ENCODE measurements at regions of chr10 and their contacts with region 1.

Region 1: DNA sequence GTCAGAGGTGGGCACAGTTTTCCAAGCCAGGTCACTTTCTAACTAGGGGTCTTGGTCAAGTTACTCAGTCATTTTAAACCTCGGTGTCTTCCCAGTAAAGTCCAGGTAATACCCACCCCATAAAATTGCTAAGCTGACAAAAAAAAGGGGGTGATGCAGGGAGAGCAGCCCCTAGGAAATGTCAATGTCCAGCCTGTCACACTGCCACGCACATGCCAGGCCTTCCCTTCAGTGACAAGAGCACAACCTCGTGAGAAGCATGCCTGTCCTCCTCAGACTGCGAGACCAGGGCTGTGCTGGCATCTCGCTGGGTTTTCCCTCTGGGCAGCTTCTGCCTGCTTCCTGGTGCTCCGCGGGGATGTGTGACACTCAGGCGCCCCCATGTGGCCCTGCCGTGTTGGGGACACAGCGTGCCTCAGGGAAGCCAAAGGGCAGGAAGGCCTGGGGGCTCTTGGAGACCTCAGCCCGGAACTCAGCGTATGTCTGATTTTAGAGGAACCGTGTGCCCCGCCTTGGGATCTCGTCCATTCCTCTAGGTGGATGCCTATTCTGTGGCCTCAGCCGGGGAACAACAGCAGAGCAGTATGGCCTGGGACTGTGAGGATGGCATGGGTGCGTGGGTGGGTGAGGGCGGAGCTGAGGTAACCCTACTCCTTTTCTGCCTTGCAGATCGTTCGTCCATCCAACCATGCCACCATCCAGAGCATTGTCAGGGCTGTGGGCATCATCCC is 10.2 kb upstream of the GDF2 start:
- DNase-seq: peak; percentile 77 to 85 (median 83)
- H3K4me3 ChIP-seq: no peak overlapping the region
- H3K27ac ChIP-seq: no peak overlapping the region
- H3K4me1 ChIP-seq: peaks cover 0 to 13% (median 3%) of the 10 kb centered on the region in 4 experiments
- H3K27me3 ChIP-seq: peaks cover 0 to 5% (median 0%) of the 10 kb centered on the region in 5 experiments

Region 2: DNA sequence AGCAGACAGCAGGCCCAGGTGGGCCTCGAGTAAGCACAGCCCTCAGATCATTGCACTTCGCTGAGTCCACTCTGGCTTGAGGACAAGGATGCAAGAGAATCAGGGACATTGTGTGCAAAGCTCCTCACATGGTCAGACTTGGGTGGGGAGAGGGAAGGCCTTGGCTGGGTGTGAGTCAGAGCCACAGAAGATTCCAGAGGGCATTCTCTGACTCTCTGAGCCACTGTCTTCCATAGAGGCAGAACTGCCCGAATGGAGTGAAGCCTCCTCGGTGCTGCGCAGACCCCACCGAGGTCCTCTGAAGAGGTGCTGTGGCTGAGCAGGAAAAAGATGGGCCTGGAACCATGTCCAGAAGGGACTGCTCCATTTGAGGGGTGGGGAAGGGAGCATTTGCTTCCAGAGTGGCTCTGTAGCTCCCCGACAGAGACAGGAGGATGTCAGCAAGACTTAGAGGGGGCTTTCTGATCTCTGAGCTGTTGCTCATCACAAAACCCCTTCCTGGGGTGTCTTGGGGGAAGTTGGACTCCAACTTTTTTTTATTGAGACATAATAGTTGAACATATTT is 280.1 kb before region 1 on chr10:
- CTCF ChIA-PET with region 1: interaction called, 69 read pairs
- POLR2A ChIA-PET with region 1: no interaction called
- DNase-seq: no peak
- H3K4me3 ChIP-seq: no peak overlapping the region
- H3K27ac ChIP-seq: no peak overlapping the region
- H3K4me1 ChIP-seq: no peaks in the 10 kb centered on the region
- H3K27me3 ChIP-seq: peaks cover 0 to 5% (median 0%) of the 10 kb centered on the region in 5 experiments

Region 3: DNA sequence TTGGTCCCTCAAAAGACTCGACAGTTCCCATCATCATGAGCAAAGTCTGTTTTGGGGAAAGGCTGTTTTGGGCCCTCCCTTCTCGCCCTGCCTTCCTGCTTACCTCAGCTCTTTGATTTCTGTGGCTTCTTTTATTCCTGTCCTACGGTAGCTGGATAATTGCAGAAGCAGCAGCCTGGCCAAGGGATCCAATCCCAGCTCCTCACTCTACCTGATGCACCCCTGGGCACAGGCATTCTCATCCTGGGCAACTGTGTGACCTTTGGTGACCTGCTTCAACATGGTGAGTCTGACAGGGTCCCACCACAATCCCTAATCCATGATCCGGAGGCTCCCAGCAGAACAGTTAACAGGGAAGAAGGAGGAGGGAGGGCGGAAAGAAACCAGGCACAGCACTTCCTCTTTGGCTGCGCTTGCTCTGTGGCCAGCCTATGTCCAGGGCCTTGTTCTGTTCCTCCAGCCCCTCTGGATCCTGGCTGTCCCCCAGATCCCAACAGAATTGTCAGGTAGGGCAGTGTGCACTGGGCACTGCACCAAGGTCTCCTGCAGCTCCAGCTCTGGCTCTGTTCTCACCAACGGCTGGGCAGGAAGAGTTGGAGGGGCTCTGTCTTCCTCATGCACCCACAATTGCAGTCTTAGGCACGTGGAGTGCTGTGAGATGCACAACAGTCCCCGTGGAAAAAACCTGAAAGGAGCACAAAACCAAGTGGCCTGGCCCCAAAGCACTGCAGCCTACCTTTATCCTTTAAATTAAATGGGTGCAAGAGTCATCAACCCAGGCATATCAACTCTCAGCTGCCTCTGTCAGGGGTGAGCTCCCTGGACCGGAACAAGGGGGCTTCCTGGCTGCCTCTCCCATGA is 256.5 kb before region 1 on chr10:
- CTCF ChIA-PET with region 1: interaction called, 12 read pairs
- POLR2A ChIA-PET with region 1: no interaction called
- DNase-seq: no peak
- H3K4me3 ChIP-seq: no peak overlapping the region
- H3K27ac ChIP-seq: no peak overlapping the region
- H3K4me1 ChIP-seq: peaks cover 0 to 3% (median 1%) of the 10 kb centered on the region in 4 experiments
- H3K27me3 ChIP-seq: no peaks in the 10 kb centered on the region

Region 4: DNA sequence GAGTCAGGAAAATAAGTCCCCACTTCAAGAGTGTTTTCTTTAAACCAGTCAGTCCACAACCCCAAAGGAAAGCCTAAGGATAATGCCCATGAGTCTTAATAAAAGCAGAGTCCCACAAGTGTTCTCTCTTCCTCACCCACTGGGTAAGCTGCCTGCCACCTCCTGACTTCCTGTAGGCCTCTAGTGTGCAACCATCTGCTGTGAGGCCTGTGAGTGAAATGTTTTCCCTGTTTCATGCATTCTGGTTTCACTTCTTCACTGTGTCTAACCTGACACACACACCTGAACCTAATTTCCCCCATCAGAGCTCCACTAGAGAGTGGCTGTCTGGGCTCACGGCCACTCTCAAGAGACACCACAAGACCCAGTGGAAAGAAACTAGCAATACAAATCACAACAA is 51.0 kb before region 1 on chr10:
- CTCF ChIA-PET with region 1: interaction called, 10 read pairs
- POLR2A ChIA-PET with region 1: no interaction called
- DNase-seq: peak; percentile 32 to 78 (median 68)
- H3K4me3 ChIP-seq: no peak overlapping the region
- H3K27ac ChIP-seq: no peak overlapping the region
- H3K4me1 ChIP-seq: peaks cover 24 to 59% (median 38%) of the 10 kb centered on the region in 4 experiments
- H3K27me3 ChIP-seq: no peaks in the 10 kb centered on the region

Region 5: GRCh38 chr10:47361293-47361692 is 49.2 kb after region 1 on chr10:
- CTCF ChIA-PET with region 1: no interaction called
- POLR2A ChIA-PET with region 1: no interaction called
- DNase-seq: peak; percentile 34 to 55 (median 49)
- H3K4me3 ChIP-seq: no peak overlapping the region
- H3K27ac ChIP-seq: no peak overlapping the region
- H3K4me1 ChIP-seq: no peaks in the 10 kb centered on the region
- H3K27me3 ChIP-seq: no peaks in the 10 kb centered on the region

Measured in common myeloid progenitor, CD34-positive (primary cell).